PC-9 (cell line): ENCODE measurements at regions of chr7 and their contacts with region 1.

Region 1: DNA sequence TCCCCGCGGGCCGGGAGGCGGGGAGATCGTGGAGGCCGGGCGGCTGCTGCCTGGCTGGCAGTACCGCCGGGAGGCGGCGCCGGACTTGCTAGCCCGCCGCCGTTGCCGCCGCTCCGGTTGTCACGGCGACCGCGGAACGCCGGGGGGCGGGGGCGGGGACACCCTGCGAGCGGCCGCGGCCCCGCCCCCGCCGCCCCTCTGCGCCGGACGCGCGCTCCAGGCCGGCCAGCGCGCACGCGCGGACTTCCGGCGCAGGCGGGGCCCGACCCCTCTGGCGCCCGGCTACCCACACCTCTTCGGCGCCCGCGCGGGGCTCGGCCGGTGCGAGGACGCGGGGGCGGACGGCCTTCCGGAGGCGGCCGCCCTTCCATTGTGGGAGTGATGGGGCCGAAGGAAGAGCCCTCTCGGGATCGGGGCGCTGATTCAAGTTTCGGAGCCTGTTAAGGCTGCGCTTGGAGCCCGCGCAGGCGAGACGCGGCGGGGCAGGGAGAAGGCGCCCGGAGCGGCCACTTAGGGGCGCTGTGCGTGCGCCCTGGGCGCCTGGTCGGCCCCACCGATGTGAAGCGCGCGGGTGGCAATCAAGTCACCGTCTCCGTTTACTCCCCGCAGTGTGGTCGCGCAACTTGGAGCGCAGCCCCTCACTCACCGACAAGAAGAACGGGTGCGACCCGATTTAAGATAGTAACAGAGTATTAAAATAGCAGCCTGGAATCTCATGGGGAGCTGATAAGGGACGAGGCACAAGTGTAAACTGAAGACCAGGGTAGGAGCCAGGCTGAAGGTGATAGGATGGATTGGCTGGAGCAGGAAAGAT is 448 bp upstream of the DPY19L1 start:
- DNase-seq: peak; percentile 83 to 98
- H3K4me3 ChIP-seq: peak overlapping the region; percentile 90
- H3K27ac ChIP-seq: peak overlapping the region; percentile 58
- H3K4me1 ChIP-seq: peaks cover 27% of the 10 kb centered on the region
- H3K27me3 ChIP-seq: no peaks in the 10 kb centered on the region
- CTCF ChIP-seq: peak; percentile 95

Region 2: GRCh38 chr7:34296663-34297062 is 741.1 kb before region 1 on chr7:
- CTCF ChIA-PET with region 1: no interaction called
- POLR2A ChIA-PET with region 1: interaction called, 20 read pairs
- intact Hi-C with region 1: no loop called
- DNase-seq: no peak
- H3K4me3 ChIP-seq: no peak overlapping the region
- H3K27ac ChIP-seq: no peak overlapping the region
- H3K4me1 ChIP-seq: no peaks in the 10 kb centered on the region
- H3K27me3 ChIP-seq: no peaks in the 10 kb centered on the region
- CTCF ChIP-seq: no peak

Region 3: GRCh38 chr7:34675749-34676374 is 361.9 kb before region 1 on chr7:
- CTCF ChIA-PET with region 1: no interaction called
- POLR2A ChIA-PET with region 1: no interaction called
- intact Hi-C with region 1: loop called (anchors 10 kb)
- DNase-seq: peak in 1 of 2 experiments; percentile 15
- H3K4me3 ChIP-seq: no peak overlapping the region
- H3K27ac ChIP-seq: no peak overlapping the region
- H3K4me1 ChIP-seq: no peaks in the 10 kb centered on the region
- H3K27me3 ChIP-seq: no peaks in the 10 kb centered on the region
- CTCF ChIP-seq: peak; percentile 94

Region 4: DNA sequence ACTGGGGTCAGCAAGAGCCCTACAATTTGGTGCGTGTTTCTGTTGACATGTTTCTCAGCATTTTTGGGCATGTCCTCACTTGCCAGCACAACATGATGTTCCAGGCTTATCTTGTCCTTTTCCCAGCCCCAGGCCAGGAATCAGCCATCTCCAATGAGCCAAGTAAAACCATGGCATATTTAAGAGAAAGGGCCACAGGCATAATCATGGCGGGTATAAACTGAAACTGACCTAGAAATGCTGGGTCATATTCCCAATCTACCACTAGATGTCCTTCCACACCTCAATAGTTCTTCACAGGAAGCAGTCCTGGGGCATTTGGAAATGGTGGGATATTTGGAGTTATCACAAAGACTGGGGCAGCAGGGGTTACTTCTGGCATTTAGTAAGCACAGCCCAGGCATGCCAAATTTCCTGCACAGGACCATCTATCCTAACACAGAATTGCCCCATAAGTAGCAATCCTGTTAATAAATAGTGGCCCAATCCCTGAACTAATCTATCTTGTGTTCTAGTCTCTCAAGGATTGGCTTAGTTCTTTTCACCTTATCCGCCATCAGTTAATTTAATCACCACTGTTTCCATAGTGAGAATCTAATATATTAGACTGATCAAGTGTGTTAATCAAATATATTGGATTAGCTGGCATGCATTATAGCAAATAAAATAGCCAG is 278.1 kb before region 1 on chr7:
- CTCF ChIA-PET with region 1: interaction called, 8 read pairs
- POLR2A ChIA-PET with region 1: no interaction called
- intact Hi-C with region 1: loop called (anchors 1 kb)
- DNase-seq: no peak
- H3K4me3 ChIP-seq: no peak overlapping the region
- H3K27ac ChIP-seq: no peak overlapping the region
- H3K4me1 ChIP-seq: peaks cover 51% of the 10 kb centered on the region
- H3K27me3 ChIP-seq: no peaks in the 10 kb centered on the region
- CTCF ChIP-seq: peak; percentile 79

Region 5: DNA sequence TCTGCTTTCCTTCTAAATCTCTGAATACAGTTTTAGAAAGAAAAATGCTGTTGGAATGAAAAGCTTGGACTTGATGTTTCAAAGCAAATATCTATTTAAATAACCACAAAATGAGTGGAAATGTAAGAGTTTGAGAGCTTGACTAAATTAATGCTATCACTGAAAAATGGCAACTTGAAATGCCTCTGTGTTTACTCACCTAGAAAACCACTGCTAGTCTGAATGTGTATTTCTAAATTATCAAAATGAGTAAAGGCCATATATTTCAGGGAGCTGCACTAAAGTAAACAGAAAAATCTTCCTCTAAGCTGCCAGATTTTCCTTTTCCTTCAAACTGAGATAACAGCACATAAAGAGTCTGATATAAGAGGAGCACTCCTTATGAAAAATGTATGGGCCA is 88.4 kb before region 1 on chr7:
- CTCF ChIA-PET with region 1: no interaction called
- POLR2A ChIA-PET with region 1: no interaction called
- intact Hi-C with region 1: loop called (anchors 5 kb)
- DNase-seq: no peak
- H3K4me3 ChIP-seq: no peak overlapping the region
- H3K27ac ChIP-seq: no peak overlapping the region
- H3K4me1 ChIP-seq: no peaks in the 10 kb centered on the region
- H3K27me3 ChIP-seq: no peaks in the 10 kb centered on the region
- CTCF ChIP-seq: no peak

Region 6: DNA sequence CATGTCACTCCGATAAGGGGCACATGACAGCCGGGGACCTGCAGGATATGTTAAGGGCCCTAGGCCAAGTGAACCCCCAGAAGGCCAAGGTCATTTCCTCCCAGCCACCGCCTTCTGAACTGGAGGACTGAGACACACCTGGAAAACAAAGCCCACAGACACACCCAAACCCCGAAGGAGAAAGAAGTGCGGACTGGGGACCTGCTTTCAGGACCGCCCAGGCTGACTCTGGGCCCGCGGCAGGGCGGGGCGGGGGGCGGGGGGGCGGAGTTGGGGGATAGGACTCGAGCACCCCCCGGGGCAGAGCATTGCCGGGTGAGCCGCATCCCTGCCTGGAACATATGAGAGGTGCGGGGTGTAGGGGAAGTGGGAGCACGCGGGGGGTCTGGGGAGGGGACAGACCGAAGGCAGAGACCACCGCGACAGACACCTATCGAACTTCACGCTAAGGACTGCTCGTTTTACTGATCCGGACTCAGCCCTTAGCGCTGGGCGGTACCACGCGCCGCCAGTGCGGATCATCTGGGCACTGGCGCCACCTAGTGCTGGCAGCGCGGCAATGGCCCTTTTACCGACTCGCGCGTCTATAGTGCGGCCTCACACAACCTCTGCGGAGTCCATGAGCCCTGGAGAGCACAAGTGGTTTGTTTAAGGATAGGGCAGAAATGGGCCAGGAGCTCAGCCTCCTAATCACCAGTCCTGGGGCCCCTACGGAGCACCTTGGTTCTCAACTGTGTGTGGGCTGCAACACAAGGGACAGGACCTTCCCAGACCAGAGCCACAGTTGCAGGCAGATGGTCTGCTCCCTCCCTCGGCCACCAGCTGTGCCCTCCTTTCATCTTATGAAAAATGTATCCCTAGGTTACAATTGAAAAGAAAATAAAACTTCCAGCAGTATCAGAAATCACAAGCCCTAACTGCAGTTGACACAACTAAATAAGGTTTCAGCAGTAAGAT is 499.6 kb after region 1 on chr7:
- CTCF ChIA-PET with region 1: no interaction called
- POLR2A ChIA-PET with region 1: no interaction called
- intact Hi-C with region 1: loop called (anchors 10 kb)
- DNase-seq: peak; percentile 56 to 73
- H3K4me3 ChIP-seq: peak overlapping the region; percentile 55
- H3K27ac ChIP-seq: no peak overlapping the region
- H3K4me1 ChIP-seq: 0 out of 2 replicates have a peak, but pooled peaks cover 9% of the 10 kb centered on the region
- H3K27me3 ChIP-seq: 0 out of 2 replicates have a peak, but pooled peaks cover 18% of the 10 kb centered on the region
- CTCF ChIP-seq: peak; percentile 100